H1 (cell line): ENCODE measurements at regions of chr10 and their contacts with region 1.

Region 1: GRCh38 chr10:95246579-95247051 is 44.2 kb downstream of the PDLIM1 start:
- DNase-seq: peak in 1 of 2 experiments; percentile 90
- H3K4me3 ChIP-seq: no peak overlapping the region
- H3K27ac ChIP-seq: no peak overlapping the region
- H3K4me1 ChIP-seq: peaks cover 0 to 11% (median 2%) of the 10 kb centered on the region in 4 experiments; a peak in 4 of 7 replicates
- H3K27me3 ChIP-seq: no peaks in the 10 kb centered on the region
- CTCF ChIP-seq: peak; percentile 61 to 89 (median 82)
- EP300 ChIP-seq: no peak
- POLR2A ChIP-seq: no peak
- RAD21 ChIP-seq: peak; percentile 85 to 89

Region 2: GRCh38 chr10:95196053-95196452 is 50.6 kb before region 1 on chr10:
- CTCF ChIA-PET with region 1: interaction called, 68 read pairs
- POLR2A ChIA-PET with region 1: no interaction called
- DNase-seq: no peak
- H3K4me3 ChIP-seq: no peak overlapping the region
- H3K27ac ChIP-seq: no peak overlapping the region
- H3K4me1 ChIP-seq: peaks cover 2 to 9% (median 6%) of the 10 kb centered on the region in 4 experiments; a peak in 4 of 7 replicates
- H3K27me3 ChIP-seq: no peaks in the 10 kb centered on the region; a peak in 1 of 7 replicates
- CTCF ChIP-seq: no peak
- EP300 ChIP-seq: no peak
- POLR2A ChIP-seq: no peak
- RAD21 ChIP-seq: 0 out of 4 replicates have a peak, but pooled peaks of 1 of the 2 experiments have one; percentile 9

Region 3: DNA sequence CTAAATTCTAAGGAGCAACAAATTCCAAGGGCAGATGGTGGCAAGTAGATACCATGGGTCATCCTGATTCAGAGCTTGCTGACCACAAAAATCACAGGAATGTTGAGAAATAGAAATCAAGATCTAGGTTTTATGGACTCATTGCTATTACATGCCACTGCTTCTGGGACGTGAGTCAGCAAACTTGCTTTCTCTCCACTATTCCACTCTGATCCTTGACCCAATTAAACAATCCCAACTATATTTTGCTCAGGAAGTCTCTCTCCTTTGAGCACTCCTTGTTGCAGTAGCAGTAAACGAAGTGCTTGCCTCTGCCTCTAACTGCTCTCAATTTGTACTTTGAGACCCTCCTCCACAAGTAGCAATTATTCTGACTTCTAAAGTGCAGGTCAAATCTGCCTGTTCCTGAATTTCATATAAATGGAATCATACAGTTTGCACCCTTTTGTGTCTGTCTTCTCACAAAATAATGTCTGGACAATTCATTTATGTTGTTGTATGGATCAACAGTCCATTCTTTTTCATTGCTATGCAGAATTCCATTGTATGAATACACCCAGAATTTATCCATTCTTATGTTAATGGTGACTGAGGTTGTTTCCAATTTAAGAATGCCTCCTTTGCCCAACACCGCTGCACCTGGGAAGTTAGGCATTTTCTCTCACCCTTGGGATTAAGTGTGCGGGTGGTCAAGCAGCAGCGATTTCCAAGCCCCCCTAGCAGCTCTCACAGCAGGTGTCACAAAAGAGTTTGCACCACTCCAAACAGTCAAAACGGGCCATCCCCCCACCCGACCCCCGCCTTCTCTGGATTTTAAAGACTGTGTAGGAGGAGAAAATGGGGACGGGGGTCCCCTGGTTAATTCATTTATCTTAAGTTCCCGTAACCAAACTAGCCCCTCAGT is 16.6 kb before region 1 on chr10:
- CTCF ChIA-PET with region 1: interaction called, 33 read pairs
- POLR2A ChIA-PET with region 1: interaction called, 57 read pairs
- DNase-seq: peak; percentile 66 to 84
- H3K4me3 ChIP-seq: peak overlapping the region; percentile 23 to 55 (median 28)
- H3K27ac ChIP-seq: peak overlapping the region; percentile 99
- H3K4me1 ChIP-seq: peaks cover 4 to 34% (median 23%) of the 10 kb centered on the region in 4 experiments; a peak in 6 of 7 replicates
- H3K27me3 ChIP-seq: no peaks in the 10 kb centered on the region
- CTCF ChIP-seq: no peak
- EP300 ChIP-seq: peak in 1 of 2 experiments; percentile 91; a peak in 1 of 3 replicates
- POLR2A ChIP-seq: peak in 1 of 2 experiments; percentile 67; a peak in 1 of 3 replicates
- RAD21 ChIP-seq: no peak

Region 4: GRCh38 chr10:95273393-95274312 is 27.0 kb after region 1 on chr10:
- CTCF ChIA-PET with region 1: interaction called, 23 read pairs
- POLR2A ChIA-PET with region 1: no interaction called
- DNase-seq: peak in 1 of 2 experiments; percentile 33
- H3K4me3 ChIP-seq: no peak overlapping the region
- H3K27ac ChIP-seq: no peak overlapping the region
- H3K4me1 ChIP-seq: peaks cover 0 to 15% (median 8%) of the 10 kb centered on the region in 4 experiments; a peak in 3 of 7 replicates
- H3K27me3 ChIP-seq: no peaks in the 10 kb centered on the region
- CTCF ChIP-seq: no peak
- EP300 ChIP-seq: no peak
- POLR2A ChIP-seq: no peak
- RAD21 ChIP-seq: no peak

Region 5: DNA sequence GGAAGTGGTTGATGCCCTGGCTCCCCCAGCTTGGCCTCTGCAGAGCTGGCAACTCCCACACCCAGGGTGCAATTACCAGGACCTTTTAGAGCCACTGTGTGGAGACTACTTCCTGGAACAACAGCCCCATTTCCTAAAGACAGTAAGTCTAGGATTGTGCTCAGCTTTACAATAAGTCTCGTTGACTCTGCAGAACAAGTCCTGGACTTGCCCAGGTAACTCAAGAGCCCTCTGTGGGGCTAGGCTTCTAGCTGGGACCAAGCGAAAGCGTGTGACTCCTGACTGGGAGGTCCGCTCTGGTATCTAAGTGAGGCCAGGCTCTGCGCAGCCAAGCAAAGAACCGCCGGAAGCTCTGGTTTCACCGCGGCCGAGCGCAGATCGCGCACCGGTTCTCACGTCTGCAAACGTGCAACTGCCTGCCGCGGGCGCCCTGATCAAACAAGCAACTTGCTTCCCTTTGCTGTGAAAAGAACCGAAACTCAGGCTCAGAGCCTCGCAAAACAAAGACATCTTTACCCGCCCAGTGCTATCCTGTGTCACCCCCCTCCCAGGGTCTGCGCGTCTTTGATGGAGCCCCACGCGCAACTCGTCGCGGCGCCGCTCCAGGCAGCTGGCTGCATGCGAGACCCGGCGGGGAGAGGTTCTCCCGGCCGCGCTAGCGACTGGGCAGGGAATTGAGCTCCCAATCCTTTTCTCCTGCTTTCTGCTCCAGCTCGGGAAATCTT is 48.6 kb after region 1 on chr10:
- CTCF ChIA-PET with region 1: interaction called, 14 read pairs
- POLR2A ChIA-PET with region 1: interaction called, 5 read pairs
- DNase-seq: peak in 1 of 2 experiments; percentile 64
- H3K4me3 ChIP-seq: peak overlapping the region; percentile 2 to 51 (median 35); a peak in 7 of 8 replicates
- H3K27ac ChIP-seq: no peak overlapping the region
- H3K4me1 ChIP-seq: peaks cover 0 to 8% (median 7%) of the 10 kb centered on the region in 4 experiments; a peak in 6 of 7 replicates
- H3K27me3 ChIP-seq: peaks cover 2 to 30% (median 26%) of the 10 kb centered on the region in 4 experiments
- CTCF ChIP-seq: peak in 1 of 3 experiments; percentile 2; a peak in 1 of 4 replicates
- EP300 ChIP-seq: no peak
- POLR2A ChIP-seq: no peak
- RAD21 ChIP-seq: no peak

Region 6: GRCh38 chr10:95363303-95363912 is 116.8 kb after region 1 on chr10:
- CTCF ChIA-PET with region 1: interaction called, 363 read pairs
- POLR2A ChIA-PET with region 1: interaction called, 4 read pairs
- DNase-seq: no peak
- H3K4me3 ChIP-seq: no peak overlapping the region
- H3K27ac ChIP-seq: no peak overlapping the region
- H3K4me1 ChIP-seq: peaks cover 0 to 3% (median 0%) of the 10 kb centered on the region in 4 experiments; a peak in 2 of 7 replicates
- H3K27me3 ChIP-seq: no peaks in the 10 kb centered on the region
- CTCF ChIP-seq: peak in 2 of 3 experiments; percentile 73 to 82; a peak in 3 of 4 replicates
- EP300 ChIP-seq: no peak
- POLR2A ChIP-seq: no peak
- RAD21 ChIP-seq: peak; percentile 95 to 96